ENCODE measurements at regions of chr7 and their contacts with region 1.

Region 1: DNA sequence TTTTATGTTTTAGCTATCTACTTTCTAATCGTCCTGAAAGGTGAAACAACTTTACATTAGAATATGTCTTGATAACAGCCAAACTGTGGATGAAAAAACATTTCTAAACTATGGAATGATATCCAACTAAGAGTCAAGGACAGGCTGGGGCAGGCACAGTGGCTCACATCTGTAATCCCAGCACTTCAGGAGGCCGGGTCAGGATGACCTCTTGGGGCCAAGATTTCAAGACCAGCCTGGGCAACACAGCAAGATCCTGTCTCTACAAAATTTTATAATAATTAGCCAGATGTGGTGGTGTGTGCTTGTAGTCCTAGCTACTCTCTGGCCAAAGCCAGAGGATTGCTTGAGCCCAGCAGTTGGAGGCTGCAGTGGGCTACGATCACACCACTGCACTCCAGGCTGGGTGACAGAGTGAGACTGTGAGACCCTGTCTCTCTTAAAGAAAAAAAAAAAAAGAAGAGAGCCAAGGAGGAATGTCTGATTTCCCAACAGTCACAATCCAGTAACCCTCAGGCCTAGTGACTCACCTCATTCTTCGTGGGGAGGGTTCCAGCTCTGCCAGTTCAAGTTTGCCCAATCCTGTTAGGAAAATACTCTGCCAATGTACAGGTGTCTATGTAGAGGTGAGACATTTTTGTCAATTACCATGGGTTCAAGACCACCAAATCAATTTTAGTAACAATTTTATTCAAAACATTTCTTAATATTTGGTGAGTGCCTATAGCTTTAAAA is 14.6 kb upstream of the FZD1 start:
- DNase-seq: no peak
- H3K4me3 ChIP-seq: no peak overlapping the region
- H3K27ac ChIP-seq: no peak overlapping the region
- H3K4me1 ChIP-seq: no peaks in the 10 kb centered on the region
- H3K27me3 ChIP-seq: peaks cover 0 to 7% of the 10 kb centered on the region in 2 experiments
- CTCF ChIP-seq: no peak
- POLR2A ChIP-seq: no peak

Region 2: DNA sequence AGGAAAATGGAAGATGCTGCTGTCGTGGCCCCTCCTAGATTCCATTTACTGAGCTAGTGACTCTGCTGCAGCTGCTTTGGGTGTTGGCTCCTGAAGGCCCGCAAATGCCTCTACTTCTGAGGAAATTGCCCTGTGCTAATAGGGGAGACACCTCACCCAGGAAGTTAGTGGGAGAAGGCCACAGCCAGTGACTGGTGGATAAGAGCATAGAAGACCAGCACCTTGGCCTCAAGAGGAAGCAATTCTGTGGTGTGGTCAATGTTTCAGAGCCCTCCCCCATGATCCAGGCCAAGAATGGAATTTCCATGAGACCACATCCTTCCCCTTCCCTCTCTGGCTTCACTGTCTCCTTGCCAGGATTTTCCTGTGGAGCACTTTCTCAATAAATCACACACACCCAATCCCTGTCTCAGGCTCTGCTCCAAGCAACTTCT is 10.5 kb before region 1 on chr7:
- CTCF ChIA-PET with region 1: interaction called, 10 read pairs
- POLR2A ChIA-PET with region 1: no interaction called
- dilution Hi-C with region 1: no loop called
- intact Hi-C with region 1: no loop called
- DNase-seq: peak; percentile 68
- H3K4me3 ChIP-seq: no peak overlapping the region
- H3K27ac ChIP-seq: no peak overlapping the region
- H3K4me1 ChIP-seq: peaks cover 12% of the 10 kb centered on the region
- H3K27me3 ChIP-seq: peaks cover 9 to 16% of the 10 kb centered on the region in 2 experiments
- CTCF ChIP-seq: no peak
- POLR2A ChIP-seq: peak; percentile 19